Gastrocnemius medialis (tissue), 4 donors: ENCODE measurements at regions of chr18 and their contacts with region 1.

Region 1: DNA sequence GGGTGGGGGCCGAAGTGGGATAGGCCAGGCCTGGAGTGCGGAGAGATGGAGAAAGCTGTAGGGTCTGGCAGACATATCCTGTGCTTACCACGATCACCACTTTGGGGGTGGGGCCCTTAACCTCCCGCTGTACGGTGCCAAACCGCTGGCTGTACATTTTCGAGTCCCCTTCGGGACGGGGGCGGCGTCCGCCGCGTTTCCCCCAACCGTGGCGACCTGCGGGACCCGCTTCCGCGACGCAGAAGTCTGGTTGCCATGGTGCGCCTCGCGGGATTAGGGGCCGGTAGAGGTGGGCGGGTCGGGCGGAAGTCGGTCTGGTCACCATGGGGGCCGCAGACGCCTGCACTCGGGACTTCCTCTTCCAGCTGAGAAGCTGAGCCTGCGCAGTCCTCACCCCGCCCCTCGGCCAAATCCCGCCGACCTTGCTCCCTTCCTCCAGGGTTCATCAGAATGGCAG is at the start of gene CFAP53:
- DNase-seq: peak; percentile 74 to 78
- ATAC-seq: peak; percentile 83 to 92
- H3K4me3 ChIP-seq: peak within 1 kb of the TSS; percentile 45 to 73 (median 71)
- H3K27ac ChIP-seq: peak within 1 kb of the TSS in 1 of 4 donors; percentile 6
- H3K4me1 ChIP-seq: peaks cover 5 to 9% of the 10 kb centered on the region in 2 donors
- H3K27me3 ChIP-seq: no peaks in the 10 kb centered on the region
- CTCF ChIP-seq: no peak
- POLR2A ChIP-seq: no peak
- total RNA-seq, gene CFAP53: 1.3 to 1.4 (median 1.4) TPM in 3 of 4 donors, not detected in the other

Region 2: GRCh38 chr18:49510393-49511115 is 755.7 kb before region 1 on chr18:
- in situ Hi-C with region 1: loop called in 1 of 4 experiments (anchors 25 kb)
- intact Hi-C with region 1: no loop called
- DNase-seq: no peak
- ATAC-seq: peak in 1 of 2 donors; percentile 53
- H3K4me3 ChIP-seq: no peak overlapping the region
- H3K27ac ChIP-seq: no peak overlapping the region
- H3K4me1 ChIP-seq: no peaks in the 10 kb centered on the region
- H3K27me3 ChIP-seq: peaks cover 0 to 3% (median 0%) of the 10 kb centered on the region in 3 donors
- CTCF ChIP-seq: peak; percentile 42 to 76 (median 64)
- POLR2A ChIP-seq: no peak

Region 3: GRCh38 chr18:50183556-50183955 is 82.7 kb before region 1 on chr18:
- in situ Hi-C with region 1: no loop called
- intact Hi-C with region 1: no loop called
- DNase-seq: no peak
- ATAC-seq: no peak
- H3K4me3 ChIP-seq: no peak overlapping the region
- H3K27ac ChIP-seq: no peak overlapping the region
- H3K4me1 ChIP-seq: no peaks in the 10 kb centered on the region
- H3K27me3 ChIP-seq: peaks cover 0 to 16% (median 13%) of the 10 kb centered on the region in 3 donors
- CTCF ChIP-seq: no peak
- POLR2A ChIP-seq: no peak

Region 4: GRCh38 chr18:50307738-50308470 is 41.6 kb after region 1 on chr18:
- in situ Hi-C with region 1: no loop called
- intact Hi-C with region 1: loop called (anchors 1 kb)
- DNase-seq: peak; percentile 70 to 82
- ATAC-seq: peak; percentile 97 to 99
- H3K4me3 ChIP-seq: peak overlapping the region; percentile 41 to 58 (median 53)
- H3K27ac ChIP-seq: peak overlapping the region in 2 of 4 donors; percentile 21 to 62
- H3K4me1 ChIP-seq: peaks cover 3 to 6% of the 10 kb centered on the region in 2 donors
- H3K27me3 ChIP-seq: peaks cover 0 to 23% (median 2%) of the 10 kb centered on the region in 3 donors
- CTCF ChIP-seq: no peak
- POLR2A ChIP-seq: no peak

Region 5: DNA sequence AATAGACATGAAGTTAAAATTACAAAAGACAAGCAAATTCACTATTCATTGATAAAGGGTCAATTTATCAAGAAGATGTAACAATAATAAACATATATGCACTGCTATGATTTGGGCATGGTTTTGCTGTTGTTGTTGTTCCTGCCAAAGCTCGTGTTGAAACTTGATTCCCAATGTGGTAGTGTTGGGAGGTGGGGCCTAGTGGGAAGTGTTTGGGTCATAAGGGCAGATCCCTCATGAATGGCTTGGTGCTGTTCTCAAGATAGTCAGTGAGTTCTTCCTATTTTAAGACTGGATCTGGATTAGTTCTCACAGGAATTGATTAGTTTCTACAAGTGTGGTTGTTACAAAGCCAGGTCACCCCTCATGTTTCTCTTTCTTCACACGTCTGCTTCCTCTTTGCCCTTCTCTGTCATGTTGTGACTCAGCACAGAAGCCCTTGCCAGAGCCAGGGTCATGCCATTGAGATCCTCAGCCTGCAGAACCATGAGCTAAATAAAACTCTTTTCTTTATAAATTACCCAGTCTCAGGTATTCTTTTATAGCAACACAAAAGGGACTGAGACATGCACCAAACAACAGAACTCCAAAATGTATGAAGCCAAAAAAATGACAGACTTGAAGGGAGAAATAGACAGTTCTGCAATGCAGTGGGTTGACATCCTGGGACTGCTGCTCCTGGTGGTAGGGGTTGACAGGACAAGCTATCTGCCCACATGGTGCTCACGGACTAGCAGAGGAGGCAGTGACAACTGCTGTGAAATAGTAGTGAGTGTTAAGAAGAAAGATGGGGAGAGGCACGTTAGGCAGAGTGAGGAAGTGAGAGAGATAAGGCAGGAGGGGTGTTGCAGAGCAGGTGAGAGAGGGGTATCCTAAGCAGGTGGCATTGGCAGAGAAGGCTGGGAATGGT is 90.0 kb after region 1 on chr18:
- in situ Hi-C with region 1: loop called in 1 of 4 experiments (anchors 10 kb)
- intact Hi-C with region 1: loop called (anchors 5 kb)
- DNase-seq: no peak
- ATAC-seq: no peak
- H3K4me3 ChIP-seq: no peak overlapping the region
- H3K27ac ChIP-seq: no peak overlapping the region
- H3K4me1 ChIP-seq: peaks cover 0 to 4% of the 10 kb centered on the region in 2 donors
- H3K27me3 ChIP-seq: no peaks in the 10 kb centered on the region
- CTCF ChIP-seq: no peak
- POLR2A ChIP-seq: no peak

Region 6: DNA sequence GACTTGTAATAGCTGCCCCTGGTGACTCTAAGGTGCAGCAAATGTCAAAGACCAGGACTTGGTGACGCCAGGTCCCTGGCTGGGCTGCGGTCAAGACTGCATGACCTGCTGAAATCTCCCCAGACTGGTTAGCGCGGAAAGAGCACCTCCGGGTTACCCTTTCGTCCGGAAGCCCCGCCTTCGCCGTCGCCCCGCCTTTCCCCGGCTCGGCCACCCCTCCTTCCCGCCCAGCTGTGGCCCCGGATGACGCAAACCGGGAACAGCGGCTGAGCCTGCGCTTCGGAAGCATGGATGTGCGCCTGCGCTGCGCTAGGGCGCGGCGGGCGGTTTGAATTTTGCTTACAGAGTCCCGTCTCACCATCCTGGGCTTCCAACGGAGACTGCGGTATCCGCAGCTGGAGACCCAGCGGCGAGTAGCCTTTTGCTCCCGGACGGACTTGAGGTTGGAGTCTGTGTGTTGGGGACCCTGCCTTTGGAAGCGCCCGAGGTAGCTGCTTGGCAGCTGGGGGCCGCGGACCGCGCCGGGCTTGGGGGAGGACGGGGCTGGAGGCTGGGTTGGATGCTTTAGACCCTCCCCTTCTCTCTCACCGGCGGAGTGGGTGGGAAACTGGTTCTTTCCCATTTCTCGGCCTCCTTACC is 108.6 kb after region 1 on chr18 and contains the start of gene SKA1:
- in situ Hi-C with region 1: loop called in 1 of 4 experiments (anchors 10 kb)
- intact Hi-C with region 1: no loop called
- DNase-seq: peak; percentile 79 to 85
- ATAC-seq: peak; percentile 98 to 99
- H3K4me3 ChIP-seq: peak within 1 kb of the TSS; percentile 52 to 60 (median 56)
- H3K27ac ChIP-seq: peak within 1 kb of the TSS; percentile 70 to 77 (median 74)
- H3K4me1 ChIP-seq: peaks cover 7 to 8% of the 10 kb centered on the region in 2 donors
- H3K27me3 ChIP-seq: no peaks in the 10 kb centered on the region
- CTCF ChIP-seq: no peak
- POLR2A ChIP-seq: peak; percentile 43 to 60
- total RNA-seq, gene SKA1: 0.15 to 0.16 TPM in 2 of 4 donors, not detected in the others

Region 7: GRCh38 chr18:50454387-50454988 is 188.2 kb after region 1 on chr18:
- in situ Hi-C with region 1: no loop called
- intact Hi-C with region 1: no loop called
- DNase-seq: no peak
- ATAC-seq: no peak
- H3K4me3 ChIP-seq: no peak overlapping the region
- H3K27ac ChIP-seq: no peak overlapping the region
- H3K4me1 ChIP-seq: no peaks in the 10 kb centered on the region
- H3K27me3 ChIP-seq: no peaks in the 10 kb centered on the region
- CTCF ChIP-seq: no peak
- POLR2A ChIP-seq: no peak